HepG2 (cell line): ENCODE measurements at regions of chr3 and their contacts with region 1.

Region 1: GRCh38 chr3:136075218-136075808 is 109.8 kb downstream of the PPP2R3A start:
- DNase-seq: peak; percentile 72
- ATAC-seq: peak; percentile 63
- H3K4me3 ChIP-seq: no peak overlapping the region
- H3K27ac ChIP-seq: no peak overlapping the region
- H3K4me1 ChIP-seq: no peaks in the 10 kb centered on the region
- H3K27me3 ChIP-seq: no peaks in the 10 kb centered on the region; a peak in 1 of 5 replicates
- CTCF ChIP-seq: peak; percentile 88
- EP300 ChIP-seq: no peak
- POLR2A ChIP-seq: no peak
- RAD21 ChIP-seq: peak; percentile 81

Region 2: DNA sequence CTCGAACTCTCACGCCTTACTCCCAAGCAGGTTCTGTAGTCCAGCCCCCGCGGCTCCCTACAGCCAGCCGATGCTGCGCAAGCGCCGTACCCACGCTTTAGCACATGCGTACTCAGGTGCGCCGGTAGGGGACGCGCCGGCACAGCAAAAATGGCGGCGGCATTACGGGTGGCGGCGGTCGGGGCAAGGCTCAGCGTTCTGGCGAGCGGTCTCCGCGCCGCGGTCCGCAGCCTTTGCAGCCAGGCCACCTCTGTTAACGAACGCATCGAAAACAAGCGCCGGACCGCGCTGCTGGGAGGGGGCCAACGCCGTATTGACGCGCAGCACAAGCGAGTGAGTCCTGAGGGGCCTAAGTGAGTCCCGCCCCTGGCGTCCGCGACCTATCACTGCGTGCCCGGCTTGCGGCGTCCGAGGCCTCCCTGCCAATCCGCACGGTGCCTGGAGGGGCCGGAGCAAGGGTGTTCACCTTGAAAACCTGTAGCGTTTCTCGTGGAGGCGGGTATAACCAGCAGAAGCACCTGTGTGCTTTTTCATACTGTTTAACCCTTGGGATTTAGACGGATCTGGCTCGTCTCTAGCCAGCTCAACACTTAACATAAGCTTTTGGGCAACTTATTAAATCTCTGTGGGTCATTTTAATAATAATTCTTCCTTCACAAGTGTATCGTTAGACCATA is 175.1 kb after region 1 on chr3 and contains the start of gene PCCB:
- CTCF ChIA-PET with region 1: no interaction called
- POLR2A ChIA-PET with region 1: no interaction called
- in situ Hi-C with region 1: no loop called
- intact Hi-C with region 1: loop called (anchors 5 kb)
- DNase-seq: peak; percentile 93
- ATAC-seq: peak; percentile 96
- H3K4me3 ChIP-seq: peak within 1 kb of the TSS; percentile 54 to 77 (median 72)
- H3K27ac ChIP-seq: peak within 1 kb of the TSS; percentile 95
- H3K4me1 ChIP-seq: peaks cover 66% of the 10 kb centered on the region
- H3K27me3 ChIP-seq: no peaks in the 10 kb centered on the region
- CTCF ChIP-seq: peak; percentile 95
- EP300 ChIP-seq: no peak
- POLR2A ChIP-seq: peak; percentile 82 to 87
- RAD21 ChIP-seq: peak; percentile 77
- total RNA-seq, gene PCCB: 88.7 and 92.6 TPM in 2 replicates

Region 3: DNA sequence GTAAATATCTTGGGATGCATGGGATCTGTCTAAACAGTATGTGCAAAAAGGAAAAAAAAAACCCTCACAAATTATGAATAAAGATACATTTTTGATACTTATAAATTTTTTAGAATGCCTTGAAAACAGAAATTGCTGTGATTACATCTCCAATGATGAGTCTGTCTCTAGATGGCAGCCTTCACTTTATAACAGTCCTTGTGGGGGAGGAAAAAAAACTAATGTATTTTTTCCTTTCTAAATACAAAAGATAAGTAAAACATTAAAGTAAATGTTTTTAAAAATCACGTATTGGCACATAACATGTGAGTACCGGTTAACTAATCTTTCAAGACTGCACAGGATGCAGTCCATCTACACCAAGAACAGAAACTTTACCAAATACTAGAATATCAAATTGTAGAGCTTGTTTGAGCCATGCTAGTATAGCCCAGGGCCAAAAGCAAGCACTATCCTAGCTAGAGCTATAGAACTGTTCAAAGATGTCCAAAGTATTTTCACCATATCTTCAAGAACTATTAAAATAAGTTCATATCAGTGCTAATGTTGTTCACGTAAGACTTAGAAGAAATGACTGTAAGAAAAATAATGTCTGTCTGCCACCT is 470.5 kb after region 1 on chr3:
- CTCF ChIA-PET with region 1: no interaction called
- POLR2A ChIA-PET with region 1: no interaction called
- in situ Hi-C with region 1: no loop called
- intact Hi-C with region 1: loop called (anchors 10 kb)
- DNase-seq: no peak
- ATAC-seq: no peak
- H3K4me3 ChIP-seq: no peak overlapping the region
- H3K27ac ChIP-seq: no peak overlapping the region
- H3K4me1 ChIP-seq: no peaks in the 10 kb centered on the region
- H3K27me3 ChIP-seq: no peaks in the 10 kb centered on the region
- CTCF ChIP-seq: peak; percentile 44
- EP300 ChIP-seq: no peak
- POLR2A ChIP-seq: no peak
- RAD21 ChIP-seq: no peak

Region 4: GRCh38 chr3:137013955-137014688 is 938.8 kb after region 1 on chr3:
- CTCF ChIA-PET with region 1: interaction called, 12 read pairs
- POLR2A ChIA-PET with region 1: no interaction called
- in situ Hi-C with region 1: loop called (anchors 10 kb)
- intact Hi-C with region 1: loop called (anchors 1 kb)
- DNase-seq: peak; percentile 82
- ATAC-seq: peak; percentile 94
- H3K4me3 ChIP-seq: peak overlapping the region; percentile 54 to 86 (median 73)
- H3K27ac ChIP-seq: peak overlapping the region; percentile 63
- H3K4me1 ChIP-seq: peaks cover 16% of the 10 kb centered on the region
- H3K27me3 ChIP-seq: no peaks in the 10 kb centered on the region; a peak in 1 of 5 replicates
- CTCF ChIP-seq: peak; percentile 94
- EP300 ChIP-seq: no peak
- POLR2A ChIP-seq: no peak; a peak in 1 of 4 replicates
- RAD21 ChIP-seq: peak; percentile 94